OCI-LY7 (cell line): ENCODE measurements at regions of chr10 and their contacts with region 1.

Region 1: GRCh38 chr10:12264204-12264940 is 68.4 kb downstream of the CDC123 start:
- DNase-seq: peak; percentile 97
- H3K4me3 ChIP-seq: peak overlapping the region; percentile 37
- H3K27ac ChIP-seq: peak overlapping the region; percentile 78
- H3K4me1 ChIP-seq: peaks cover 25% of the 10 kb centered on the region
- CTCF ChIP-seq: peak; percentile 89

Region 2: GRCh38 chr10:12340371-12340770 is 76.0 kb after region 1 on chr10:
- CTCF ChIA-PET with region 1: interaction called, 6 read pairs
- POLR2A ChIA-PET with region 1: interaction called, 7 read pairs
- intact Hi-C with region 1: loop called (anchors 2 kb)
- DNase-seq: peak; percentile 61
- H3K4me3 ChIP-seq: peak overlapping the region; percentile 52
- H3K27ac ChIP-seq: peak overlapping the region; percentile 100
- H3K4me1 ChIP-seq: peaks cover 74% of the 10 kb centered on the region
- CTCF ChIP-seq: no peak

Region 3: GRCh38 chr10:12428447-12429135 is 164.2 kb after region 1 on chr10:
- CTCF ChIA-PET with region 1: no interaction called
- POLR2A ChIA-PET with region 1: no interaction called
- intact Hi-C with region 1: no loop called
- DNase-seq: no peak
- H3K4me3 ChIP-seq: no peak overlapping the region
- H3K27ac ChIP-seq: no peak overlapping the region
- H3K4me1 ChIP-seq: peaks cover 19% of the 10 kb centered on the region
- CTCF ChIP-seq: peak; percentile 25; the same call in 1 of the 2 replicates

Region 4: DNA sequence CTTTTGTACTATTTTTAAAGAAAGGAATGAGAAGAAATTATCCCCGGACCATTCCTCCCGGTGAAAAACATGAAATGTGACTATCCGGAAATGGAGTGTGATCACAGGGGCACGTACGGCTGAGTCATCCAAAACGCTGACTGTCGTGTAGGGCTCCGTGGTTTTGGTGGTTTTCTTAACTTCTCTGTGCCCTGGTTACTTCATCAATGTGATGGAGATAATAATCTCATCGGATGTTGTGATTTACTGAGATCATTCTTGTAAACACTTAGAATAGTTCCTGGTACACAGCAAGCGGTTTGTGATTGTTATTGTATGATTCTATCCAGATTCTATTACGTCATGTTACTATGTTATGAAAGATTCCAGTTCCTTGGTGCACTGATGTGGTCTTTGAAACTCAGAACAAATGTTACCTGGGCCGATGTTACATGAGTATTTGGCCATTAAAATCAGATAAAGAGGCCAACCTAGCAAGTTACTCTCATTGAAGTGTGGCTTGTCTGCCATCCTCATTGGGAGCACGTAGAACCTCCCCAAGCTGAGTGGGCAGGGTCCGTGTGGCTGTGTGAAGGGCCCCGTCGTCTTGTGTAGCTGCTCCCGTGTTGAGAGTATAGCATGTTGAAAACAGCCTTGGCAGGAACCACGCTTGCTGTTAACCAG is 184.5 kb after region 1 on chr10:
- CTCF ChIA-PET with region 1: no interaction called
- POLR2A ChIA-PET with region 1: no interaction called
- intact Hi-C with region 1: no loop called
- DNase-seq: peak; percentile 14
- H3K4me3 ChIP-seq: no peak overlapping the region
- H3K27ac ChIP-seq: no peak overlapping the region
- H3K4me1 ChIP-seq: peaks cover 9% of the 10 kb centered on the region
- CTCF ChIP-seq: no peak

Region 5: GRCh38 chr10:12484941-12485805 is 220.8 kb after region 1 on chr10:
- CTCF ChIA-PET with region 1: interaction called, 16 read pairs
- POLR2A ChIA-PET with region 1: interaction called, 4 read pairs
- intact Hi-C with region 1: loop called (anchors 1 kb)
- DNase-seq: peak; percentile 86
- H3K4me3 ChIP-seq: peak overlapping the region; percentile 62
- H3K27ac ChIP-seq: peak overlapping the region; percentile 87
- H3K4me1 ChIP-seq: peaks cover 39% of the 10 kb centered on the region
- CTCF ChIP-seq: peak; percentile 78

Region 6: DNA sequence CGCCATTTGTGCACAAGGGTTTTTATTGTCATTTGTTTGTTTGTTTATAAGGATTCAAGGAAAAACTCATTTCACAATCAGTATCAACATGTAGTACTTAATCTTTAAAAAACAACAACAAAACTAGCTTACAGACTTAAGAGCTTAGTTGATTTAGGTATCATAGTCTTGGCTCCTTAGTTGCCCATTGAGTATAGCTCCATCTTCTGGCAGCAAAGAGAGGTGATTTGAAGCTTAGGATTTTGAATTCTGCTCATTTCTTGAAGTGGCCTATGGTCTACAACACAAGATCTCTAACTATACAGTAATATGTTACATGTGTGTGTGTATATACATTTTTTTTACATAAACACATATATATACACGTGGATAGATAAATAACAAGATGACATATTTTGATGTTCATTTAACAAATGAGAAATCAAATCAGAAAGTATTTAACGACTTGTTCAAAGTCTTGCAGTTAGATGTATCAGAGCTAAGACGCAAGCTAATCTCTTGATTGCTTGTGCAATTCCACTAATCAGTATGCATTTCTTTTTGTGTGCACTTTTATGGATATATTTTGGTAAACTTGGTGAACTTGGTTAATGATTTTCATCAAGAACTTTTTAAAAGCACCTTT is 392.3 kb after region 1 on chr10:
- CTCF ChIA-PET with region 1: interaction called, 8 read pairs
- POLR2A ChIA-PET with region 1: no interaction called
- intact Hi-C with region 1: loop called (anchors 1 kb)
- DNase-seq: peak; percentile 72
- H3K4me3 ChIP-seq: no peak overlapping the region
- H3K27ac ChIP-seq: no peak overlapping the region
- H3K4me1 ChIP-seq: no peaks in the 10 kb centered on the region
- CTCF ChIP-seq: peak; percentile 94

Region 7: GRCh38 chr10:12902135-12902572 is 637.8 kb after region 1 on chr10:
- CTCF ChIA-PET with region 1: no interaction called
- POLR2A ChIA-PET with region 1: no interaction called
- intact Hi-C with region 1: loop called (anchors 10 kb)
- DNase-seq: peak; percentile 68
- H3K4me3 ChIP-seq: no peak overlapping the region
- H3K27ac ChIP-seq: no peak overlapping the region
- H3K4me1 ChIP-seq: no peaks in the 10 kb centered on the region
- CTCF ChIP-seq: peak; percentile 92